Endothelial cell of umbilical vein (primary cell): ENCODE measurements at regions of chr21 and their contacts with region 1.

Region 1: DNA sequence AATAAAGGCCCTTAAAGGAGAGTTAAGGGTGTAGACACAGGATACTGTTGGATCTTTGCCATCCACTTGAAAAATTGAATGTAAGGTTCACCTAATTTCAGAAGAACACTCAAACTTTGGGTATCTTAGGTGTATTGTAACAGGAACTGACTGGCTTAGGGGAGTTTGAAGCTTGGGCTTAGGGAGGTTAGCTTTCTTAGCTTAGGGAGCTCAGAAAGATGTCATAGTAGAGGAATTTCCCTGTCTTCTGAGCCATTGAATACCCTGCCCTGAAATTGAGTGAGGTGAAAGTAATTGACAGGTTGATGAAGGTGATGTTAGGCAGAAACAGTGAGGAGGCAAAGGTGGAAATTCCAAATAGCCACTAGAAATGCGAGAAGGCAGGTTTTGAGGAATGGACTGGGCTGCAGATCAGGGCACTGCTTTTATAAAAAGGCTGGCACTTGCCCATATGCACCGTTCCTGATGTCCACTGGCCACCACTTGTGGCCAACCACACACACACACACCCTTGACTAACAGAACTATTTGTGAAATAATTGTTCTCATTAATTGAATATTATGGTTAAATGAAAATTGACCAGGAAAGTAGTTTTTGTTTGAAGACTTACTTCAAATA is 16.5 kb downstream of the BACH1 start:
- DNase-seq: no peak
- H3K4me3 ChIP-seq: no peak overlapping the region
- H3K27ac ChIP-seq: no peak overlapping the region
- H3K4me1 ChIP-seq: peaks cover 19% of the 10 kb centered on the region
- H3K27me3 ChIP-seq: no peaks in the 10 kb centered on the region
- CTCF ChIP-seq: no peak
- POLR2A ChIP-seq: no peak

Region 2: GRCh38 chr21:29334712-29335428 is 19.6 kb after region 1 on chr21:
- CTCF ChIA-PET with region 1: interaction called, 5 read pairs
- POLR2A ChIA-PET with region 1: no interaction called
- dilution Hi-C with region 1: no loop called
- intact Hi-C with region 1: loop called (anchors 2 kb)
- DNase-seq: no peak
- H3K4me3 ChIP-seq: no peak overlapping the region
- H3K27ac ChIP-seq: no peak overlapping the region
- H3K4me1 ChIP-seq: peaks cover 11% of the 10 kb centered on the region
- H3K27me3 ChIP-seq: no peaks in the 10 kb centered on the region
- CTCF ChIP-seq: no peak
- POLR2A ChIP-seq: no peak

Region 3: GRCh38 chr21:29342363-29342957 is 27.2 kb after region 1 on chr21:
- CTCF ChIA-PET with region 1: interaction called, 5 read pairs
- POLR2A ChIA-PET with region 1: no interaction called
- dilution Hi-C with region 1: no loop called
- intact Hi-C with region 1: loop called (anchors 2 kb)
- DNase-seq: peak; percentile 91
- H3K4me3 ChIP-seq: no peak overlapping the region
- H3K27ac ChIP-seq: peak overlapping the region; percentile 82
- H3K4me1 ChIP-seq: peaks cover 29% of the 10 kb centered on the region
- H3K27me3 ChIP-seq: no peaks in the 10 kb centered on the region
- CTCF ChIP-seq: no peak
- POLR2A ChIP-seq: peak; percentile 33